ENCODE measurements at regions of chr3 and their contacts with region 1.

Region 1: DNA sequence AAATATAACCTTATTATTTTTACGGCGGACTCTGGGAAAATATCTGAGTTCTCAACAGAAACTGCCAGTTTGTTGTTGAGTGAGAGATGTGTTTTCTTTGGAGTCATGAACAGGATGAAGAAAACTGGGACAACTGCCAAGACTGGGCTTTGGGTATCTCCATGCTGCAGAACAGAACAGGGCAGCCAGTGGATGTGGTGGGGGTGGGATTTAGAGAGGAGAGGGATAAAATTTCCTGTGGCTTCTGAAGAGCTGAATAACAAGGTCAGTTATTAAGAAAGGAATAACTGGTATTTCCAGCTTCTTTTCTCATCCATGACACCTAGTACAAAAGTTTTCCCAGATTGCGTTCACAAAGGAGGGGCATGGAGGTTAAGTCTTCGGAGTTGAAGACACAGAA is 18.3 kb upstream of the TM4SF1 start:
- DNase-seq: peak in 3 of 6 donors; percentile 49 to 69 (median 56)
- ATAC-seq: peak; percentile 33 to 62 (median 60)
- H3K4me3 ChIP-seq: no peak overlapping the region
- H3K27ac ChIP-seq: peak overlapping the region in 2 of 4 donors; percentile 63 to 75
- H3K4me1 ChIP-seq: peaks cover 35 to 56% (median 54%) of the 10 kb centered on the region in 3 donors
- H3K27me3 ChIP-seq: no peaks in the 10 kb centered on the region
- CTCF ChIP-seq: no peak

Region 2: DNA sequence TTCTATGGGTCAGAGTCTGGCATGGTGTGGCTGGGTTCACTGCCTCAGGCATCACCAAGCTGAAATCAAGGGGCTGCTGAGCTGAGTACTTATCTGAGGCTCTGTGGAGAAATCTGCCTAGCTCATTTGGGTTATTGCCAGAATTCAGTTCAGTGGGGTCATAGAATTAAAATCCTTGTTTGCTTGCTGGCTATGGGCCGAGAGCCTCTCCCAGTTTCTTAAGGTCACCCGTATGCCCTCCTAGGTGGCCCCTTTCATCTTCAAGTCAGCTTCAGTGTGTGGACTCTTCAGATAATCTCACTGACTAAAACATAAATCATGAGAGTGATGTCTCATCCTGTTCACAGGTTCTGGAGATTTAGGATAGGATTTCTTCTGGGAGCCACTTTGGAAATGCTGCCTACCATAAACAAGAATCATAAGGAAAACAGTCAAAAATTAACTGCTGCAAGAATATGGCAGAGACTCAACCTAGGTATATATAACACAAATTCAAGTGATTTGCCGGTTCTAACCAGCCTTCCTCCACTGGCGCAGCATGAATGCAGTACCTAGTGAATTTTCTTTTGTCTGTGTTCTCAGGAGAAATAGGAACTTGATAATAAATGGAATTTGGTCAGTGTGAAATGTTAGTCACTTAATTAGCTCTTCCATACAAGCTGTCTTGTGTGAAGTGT is 179.4 kb before region 1 on chr3:
- intact Hi-C with region 1: no loop called
- DNase-seq: no peak
- ATAC-seq: peak in 1 of 4 donors; percentile 32
- H3K4me3 ChIP-seq: no peak overlapping the region
- H3K27ac ChIP-seq: no peak overlapping the region
- H3K4me1 ChIP-seq: peaks cover 0 to 20% (median 2%) of the 10 kb centered on the region in 3 donors
- H3K27me3 ChIP-seq: no peaks in the 10 kb centered on the region
- CTCF ChIP-seq: no peak

Region 3: GRCh38 chr3:149339931-149340309 is 55.8 kb before region 1 on chr3:
- intact Hi-C with region 1: no loop called
- DNase-seq: peak; percentile 69 to 83 (median 76)
- ATAC-seq: peak; percentile 86 to 93 (median 90)
- H3K4me3 ChIP-seq: peak overlapping the region in 1 of 4 donors; percentile 2
- H3K27ac ChIP-seq: peak overlapping the region; percentile 43 to 94 (median 77)
- H3K4me1 ChIP-seq: peaks cover 9 to 45% (median 24%) of the 10 kb centered on the region in 3 donors
- H3K27me3 ChIP-seq: no peaks in the 10 kb centered on the region
- CTCF ChIP-seq: no peak

Region 4: DNA sequence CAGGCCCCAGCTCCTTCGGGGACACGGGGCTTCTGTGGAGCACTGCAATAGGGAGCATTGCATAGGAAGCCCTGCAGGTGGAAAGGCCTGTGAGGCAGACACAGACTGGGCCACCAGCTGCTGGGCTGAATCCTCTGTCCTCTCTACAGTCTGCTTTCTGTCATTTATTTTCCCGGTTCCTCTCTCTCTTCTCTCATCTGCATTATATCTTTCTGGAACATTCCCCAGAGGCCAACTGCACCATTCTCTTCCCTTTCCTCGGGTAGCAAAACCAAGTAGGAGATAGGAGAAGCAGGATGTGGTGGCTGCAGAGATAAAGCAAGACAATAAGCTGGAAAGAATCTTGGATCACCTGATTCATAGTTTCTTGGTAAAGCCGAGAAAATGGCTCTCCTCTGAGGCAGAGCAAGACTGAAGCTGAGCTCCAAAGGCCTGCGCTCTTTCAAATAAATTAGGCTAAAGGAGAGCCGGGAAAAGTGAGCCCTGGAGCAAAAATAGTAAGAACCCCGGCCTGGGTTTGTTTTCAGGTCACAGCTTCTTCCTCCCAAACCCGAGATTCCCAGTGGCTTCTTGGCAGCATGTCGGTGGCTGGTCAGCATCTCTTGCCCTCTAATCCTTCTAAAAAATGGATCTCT is 84.0 kb after region 1 on chr3:
- intact Hi-C with region 1: loop called in 2 of 3 experiments (anchors 5 kb)
- DNase-seq: no peak
- ATAC-seq: peak in 3 of 4 donors; percentile 10 to 34 (median 12)
- H3K4me3 ChIP-seq: no peak overlapping the region
- H3K27ac ChIP-seq: peak overlapping the region in 3 of 4 donors; percentile 51 to 60 (median 54)
- H3K4me1 ChIP-seq: peaks cover 8 to 13% (median 9%) of the 10 kb centered on the region in 3 donors
- H3K27me3 ChIP-seq: no peaks in the 10 kb centered on the region
- CTCF ChIP-seq: no peak

Measured in pancreas (tissue), 10 donors.